ENCODE measurements at regions of chr1 and their contacts with region 1.

Region 1: GRCh38 chr1:225999227-225999911 is at the start of gene SDE2:
- DNase-seq: peak; percentile 100
- ATAC-seq: peak; percentile 78
- H3K4me3 Mint-ChIP-seq: peak within 1 kb of the TSS; percentile 100
- H3K27ac Mint-ChIP-seq: peak within 1 kb of the TSS; percentile 100
- H3K4me1 Mint-ChIP-seq: peaks cover 61% of the 10 kb centered on the region
- H3K27me3 Mint-ChIP-seq: no peaks in the 10 kb centered on the region
- total RNA-seq, gene SDE2: 17.2 to 18.5 TPM

Region 2: GRCh38 chr1:225428068-225428880 is 571.1 kb before region 1 on chr1:
- POLR2A ChIA-PET with region 1: interaction called, 12 read pairs
- DNase-seq: peak; percentile 94
- ATAC-seq: peak; percentile 93
- H3K4me3 Mint-ChIP-seq: peak overlapping the region; percentile 87
- H3K27ac Mint-ChIP-seq: peak overlapping the region; percentile 89
- H3K4me1 Mint-ChIP-seq: peaks cover 43% of the 10 kb centered on the region
- H3K27me3 Mint-ChIP-seq: peaks cover 2% of the 10 kb centered on the region

Region 3: GRCh38 chr1:225777583-225778336 is 221.6 kb before region 1 on chr1 and contains the start of gene SRP9:
- POLR2A ChIA-PET with region 1: interaction called, 29 read pairs
- DNase-seq: peak; percentile 98
- ATAC-seq: peak; percentile 97
- H3K4me3 Mint-ChIP-seq: no peak within 1 kb of the TSS
- H3K27ac Mint-ChIP-seq: no peak within 1 kb of the TSS
- H3K4me1 Mint-ChIP-seq: peaks cover 20% of the 10 kb centered on the region
- H3K27me3 Mint-ChIP-seq: no peaks in the 10 kb centered on the region
- total RNA-seq, gene SRP9: 209 to 226 TPM

Region 4: GRCh38 chr1:225923692-225924555 is 75.4 kb before region 1 on chr1 and contains the start of gene PYCR2:
- POLR2A ChIA-PET with region 1: interaction called, 11 read pairs
- DNase-seq: peak; percentile 97
- ATAC-seq: peak; percentile 95
- H3K4me3 Mint-ChIP-seq: peak within 1 kb of the TSS; percentile 96
- H3K27ac Mint-ChIP-seq: peak within 1 kb of the TSS; percentile 95
- H3K4me1 Mint-ChIP-seq: peaks cover 43% of the 10 kb centered on the region
- H3K27me3 Mint-ChIP-seq: no peaks in the 10 kb centered on the region
- total RNA-seq, gene PYCR2: 118 to 125 TPM

Region 5: GRCh38 chr1:226062558-226063223 is 63.3 kb after region 1 on chr1 and contains the start of gene H3-3A:
- POLR2A ChIA-PET with region 1: interaction called, 287 read pairs
- DNase-seq: peak; percentile 99
- ATAC-seq: peak; percentile 85
- H3K4me3 Mint-ChIP-seq: peak within 1 kb of the TSS; percentile 99
- H3K27ac Mint-ChIP-seq: peak within 1 kb of the TSS; percentile 100
- H3K4me1 Mint-ChIP-seq: peaks cover 26% of the 10 kb centered on the region
- H3K27me3 Mint-ChIP-seq: no peaks in the 10 kb centered on the region
- total RNA-seq, gene H3-3A: 454 to 466 TPM

Region 6: DNA sequence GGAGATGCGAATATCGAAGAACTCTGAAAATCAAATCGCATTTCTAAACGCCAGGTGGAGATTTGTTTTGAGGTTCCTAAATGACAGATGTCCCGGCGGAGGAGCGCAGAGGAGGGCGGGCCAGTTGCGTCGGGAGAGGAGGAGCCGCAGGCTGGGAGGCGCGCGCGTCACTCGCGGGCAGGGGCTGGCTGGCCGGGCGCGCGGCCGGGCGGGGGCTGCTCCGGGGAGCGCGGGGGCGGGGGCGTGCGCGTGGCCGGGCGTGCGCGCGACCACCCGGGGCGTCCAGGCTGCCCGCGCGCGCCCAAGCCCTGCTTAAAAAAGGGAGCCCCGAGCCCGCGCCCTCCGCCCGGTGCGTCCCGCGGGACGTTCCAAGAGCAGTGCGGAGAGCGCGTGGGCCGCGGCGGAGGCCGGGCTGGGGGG is 110.5 kb after region 1 on chr1:
- POLR2A ChIA-PET with region 1: interaction called, 10 read pairs
- DNase-seq: peak; percentile 86
- ATAC-seq: peak; percentile 82
- H3K4me3 Mint-ChIP-seq: peak overlapping the region; percentile 88
- H3K27ac Mint-ChIP-seq: peak overlapping the region; percentile 89
- H3K4me1 Mint-ChIP-seq: peaks cover 8% of the 10 kb centered on the region
- H3K27me3 Mint-ChIP-seq: peaks cover 3% of the 10 kb centered on the region